ENCODE measurements at regions of chr2 and their contacts with region 1.

Region 1: GRCh38 chr2:169877398-169877797 is 50.1 kb downstream of the UBR3 start:
- DNase-seq: no peak
- ATAC-seq: no peak
- H3K4me3 ChIP-seq: no peak overlapping the region
- H3K27ac ChIP-seq: no peak overlapping the region
- H3K4me1 ChIP-seq: no peaks in the 10 kb centered on the region
- H3K27me3 ChIP-seq: no peaks in the 10 kb centered on the region
- CTCF ChIP-seq: peak in 3 of 5 experiments; percentile 12 to 44 (median 33)
- POLR2A ChIP-seq: no peak

Region 2: GRCh38 chr2:171146633-171147032 is 1269.2 kb after region 1 on chr2:
- in situ Hi-C with region 1: no loop called
- intact Hi-C with region 1: loop called (anchors 5 kb)
- DNase-seq: no peak
- ATAC-seq: no peak
- H3K4me3 ChIP-seq: no peak overlapping the region
- H3K27ac ChIP-seq: peak overlapping the region in 1 of 4 donors; percentile 37
- H3K4me1 ChIP-seq: peaks cover 10 to 18% of the 10 kb centered on the region in 2 donors
- H3K27me3 ChIP-seq: no peaks in the 10 kb centered on the region
- CTCF ChIP-seq: no peak
- POLR2A ChIP-seq: no peak